ENCODE measurements at regions of chr3 and their contacts with region 1.

Region 1: GRCh38 chr3:183555541-183556081 is at the start of gene KLHL6:
- DNase-seq: peak; percentile 89
- ATAC-seq: peak; percentile 85
- H3K4me3 Mint-ChIP-seq: peak within 1 kb of the TSS; percentile 97
- H3K27ac Mint-ChIP-seq: peak within 1 kb of the TSS; percentile 100
- H3K4me1 Mint-ChIP-seq: peaks cover 47% of the 10 kb centered on the region
- H3K27me3 Mint-ChIP-seq: no peaks in the 10 kb centered on the region
- total RNA-seq, gene KLHL6: 62.8 to 64.7 TPM

Region 2: GRCh38 chr3:183265834-183266417 is 289.7 kb before region 1 on chr3:
- CTCF ChIA-PET with region 1: no interaction called
- POLR2A ChIA-PET with region 1: no interaction called
- intact Hi-C with region 1: loop called in 1 of 2 experiments (anchors 1 kb)
- DNase-seq: peak; percentile 75
- ATAC-seq: peak; percentile 98
- H3K4me3 Mint-ChIP-seq: no peak overlapping the region
- H3K27ac Mint-ChIP-seq: no peak overlapping the region
- H3K4me1 Mint-ChIP-seq: peaks cover 2% of the 10 kb centered on the region
- H3K27me3 Mint-ChIP-seq: no peaks in the 10 kb centered on the region

Region 3: GRCh38 chr3:183377307-183377959 is 178.2 kb before region 1 on chr3:
- CTCF ChIA-PET with region 1: no interaction called
- POLR2A ChIA-PET with region 1: no interaction called
- intact Hi-C with region 1: no loop called
- DNase-seq: peak; percentile 24
- ATAC-seq: peak; percentile 77
- H3K4me3 Mint-ChIP-seq: no peak overlapping the region
- H3K27ac Mint-ChIP-seq: peak overlapping the region; percentile 58
- H3K4me1 Mint-ChIP-seq: peaks cover 43% of the 10 kb centered on the region
- H3K27me3 Mint-ChIP-seq: no peaks in the 10 kb centered on the region

Region 4: GRCh38 chr3:183481582-183481981 is 74.0 kb before region 1 on chr3:
- CTCF ChIA-PET with region 1: interaction called, 3 read pairs
- POLR2A ChIA-PET with region 1: no interaction called
- intact Hi-C with region 1: loop called (anchors 2 kb)
- DNase-seq: peak; percentile 50
- ATAC-seq: peak; percentile 81
- H3K4me3 Mint-ChIP-seq: no peak overlapping the region
- H3K27ac Mint-ChIP-seq: peak overlapping the region; percentile 34
- H3K4me1 Mint-ChIP-seq: peaks cover 14% of the 10 kb centered on the region
- H3K27me3 Mint-ChIP-seq: no peaks in the 10 kb centered on the region

Region 5: GRCh38 chr3:183540501-183541234 is 14.9 kb before region 1 on chr3:
- CTCF ChIA-PET with region 1: interaction called, 6 read pairs
- POLR2A ChIA-PET with region 1: interaction called, 3 read pairs
- intact Hi-C with region 1: loop called in 1 of 2 experiments (anchors 2 kb)
- DNase-seq: no peak
- ATAC-seq: peak; percentile 22
- H3K4me3 Mint-ChIP-seq: no peak overlapping the region
- H3K27ac Mint-ChIP-seq: peak overlapping the region; percentile 53
- H3K4me1 Mint-ChIP-seq: peaks cover 94% of the 10 kb centered on the region
- H3K27me3 Mint-ChIP-seq: no peaks in the 10 kb centered on the region

Region 6: DNA sequence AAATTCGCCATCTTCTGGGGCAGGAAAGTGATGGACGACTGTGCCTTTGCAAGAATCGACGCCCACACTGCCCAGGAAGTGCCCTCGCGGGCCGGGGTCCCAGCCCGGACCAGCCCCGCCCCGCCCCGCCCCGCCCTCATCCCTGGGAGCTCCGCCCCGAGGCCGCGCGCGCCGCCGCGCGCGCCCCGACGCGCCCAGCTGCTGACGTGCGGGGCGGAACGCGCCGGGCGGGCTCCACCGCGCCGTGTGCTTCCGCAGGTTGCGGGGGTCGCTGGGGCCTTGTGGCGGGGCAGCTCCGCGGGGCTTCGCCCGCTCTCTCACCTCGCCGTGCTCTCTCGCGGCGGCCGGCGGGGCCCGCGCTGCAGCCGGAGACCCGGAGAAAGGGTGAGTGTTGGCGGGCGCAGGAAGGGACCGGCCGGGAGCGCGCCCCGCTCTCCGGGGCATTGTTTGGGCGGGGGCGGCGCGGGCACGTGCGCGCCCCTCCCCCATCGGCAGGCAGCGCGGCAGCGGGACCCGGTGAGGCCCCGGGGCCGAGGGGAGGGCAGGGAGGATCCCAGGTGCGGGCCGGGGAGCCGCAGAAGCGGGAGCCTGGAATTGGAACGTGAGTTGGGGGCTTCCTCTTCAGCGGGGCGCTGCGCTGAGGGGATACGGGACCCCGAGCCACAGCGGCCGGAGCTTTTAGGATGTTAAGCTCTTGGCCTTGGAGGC is 142.2 kb after region 1 on chr3 and contains the start of gene YEATS2:
- CTCF ChIA-PET with region 1: no interaction called
- POLR2A ChIA-PET with region 1: no interaction called
- intact Hi-C with region 1: loop called (anchors 1 kb)
- DNase-seq: peak; percentile 91
- ATAC-seq: peak; percentile 81
- H3K4me3 Mint-ChIP-seq: peak within 1 kb of the TSS; percentile 91
- H3K27ac Mint-ChIP-seq: peak within 1 kb of the TSS; percentile 89
- H3K4me1 Mint-ChIP-seq: peaks cover 31% of the 10 kb centered on the region
- H3K27me3 Mint-ChIP-seq: no peaks in the 10 kb centered on the region
- total RNA-seq, gene YEATS2: 59.4 to 73.9 TPM

Region 7: DNA sequence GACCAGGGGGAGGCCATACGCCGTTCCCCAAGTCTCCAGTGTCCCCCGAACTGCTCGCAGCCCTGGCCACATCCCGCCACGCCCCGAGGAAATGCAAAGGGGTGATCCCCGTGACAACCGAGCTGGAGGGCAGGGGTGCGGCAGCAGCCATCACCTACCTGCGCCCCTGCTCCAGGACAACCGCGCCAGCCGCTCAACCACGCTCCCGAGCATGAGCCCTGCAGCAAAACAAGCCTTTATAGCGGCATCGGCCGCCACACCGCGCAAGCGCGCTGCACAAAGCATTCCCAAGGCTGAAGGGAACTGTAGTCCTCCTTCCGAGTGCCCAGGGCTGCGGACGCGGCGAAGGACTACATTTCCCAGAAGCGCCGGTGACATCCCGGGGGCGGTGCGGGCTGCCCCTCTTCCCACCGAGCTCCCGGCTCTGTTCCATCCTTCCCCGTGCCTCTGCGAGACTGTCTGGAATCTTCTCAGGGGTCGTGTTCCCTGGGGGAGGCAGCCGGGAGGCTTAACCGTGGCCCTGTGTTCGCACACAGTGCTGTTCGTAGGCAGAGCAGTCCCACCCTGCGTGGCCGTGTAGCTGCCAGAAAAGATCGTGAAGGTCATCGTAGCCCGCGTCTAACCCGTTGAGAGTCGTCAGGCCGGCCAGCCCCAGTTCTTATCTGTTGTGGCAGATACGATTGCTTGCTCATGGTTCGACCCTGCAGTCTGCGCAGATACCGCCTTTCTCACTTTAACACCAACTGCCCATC is 462.2 kb after region 1 on chr3 and contains the start of gene ABCC5:
- CTCF ChIA-PET with region 1: no interaction called
- POLR2A ChIA-PET with region 1: no interaction called
- intact Hi-C with region 1: loop called in 1 of 2 experiments (anchors 5 kb)
- DNase-seq: peak; percentile 91
- ATAC-seq: peak; percentile 96
- H3K4me3 Mint-ChIP-seq: peak within 1 kb of the TSS; percentile 98
- H3K27ac Mint-ChIP-seq: peak within 1 kb of the TSS; percentile 85
- H3K4me1 Mint-ChIP-seq: peaks cover 17% of the 10 kb centered on the region
- H3K27me3 Mint-ChIP-seq: peaks cover 9% of the 10 kb centered on the region
- total RNA-seq, gene ABCC5: 12.5 to 15.8 TPM